ENCODE measurements at regions of chr1 and their contacts with region 1.

Region 1: DNA sequence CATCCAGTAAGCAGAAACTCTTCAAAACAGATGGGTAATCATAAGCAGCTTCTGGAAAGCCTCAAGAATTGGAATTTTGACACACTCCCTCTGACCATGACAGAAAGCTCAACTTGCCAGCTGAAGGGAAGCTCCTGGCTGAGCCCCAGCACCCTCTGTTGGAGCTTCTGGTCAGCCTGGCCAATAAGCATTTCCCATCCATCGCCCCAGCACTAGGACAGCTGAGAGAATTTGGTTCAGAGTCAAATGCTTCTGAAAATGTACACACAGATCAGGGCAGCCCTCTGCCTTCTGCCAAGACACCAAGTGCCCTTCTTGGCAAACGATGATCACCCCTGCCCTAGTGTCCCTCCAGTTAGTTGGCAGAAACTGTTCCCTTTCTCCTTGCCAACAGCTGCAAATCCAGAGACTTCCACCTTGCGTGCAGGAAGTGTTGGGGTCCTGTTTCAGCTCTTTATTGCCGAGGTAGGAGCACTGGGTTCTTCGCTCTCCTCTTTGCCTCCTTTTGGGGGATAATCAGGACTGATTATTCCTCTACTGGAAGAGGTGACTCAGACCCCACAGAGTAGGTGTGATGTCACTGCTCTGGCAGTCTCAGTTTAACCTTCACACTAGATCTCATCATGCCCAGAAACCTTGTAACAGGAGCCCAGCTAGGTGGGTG is 11.9 kb downstream of the PIGV start:
- DNase-seq: no peak
- H3K4me3 ChIP-seq: no peak overlapping the region
- H3K4me3 Mint-ChIP-seq: peak overlapping the region in 7 of 8 donors; percentile 49 to 83 (median 79)
- H3K27ac ChIP-seq: peak overlapping the region; percentile 30
- H3K27ac Mint-ChIP-seq: peak overlapping the region; percentile 91 to 97 (median 92)
- H3K4me1 ChIP-seq: peaks cover 35% of the 10 kb centered on the region
- H3K4me1 Mint-ChIP-seq: peaks cover 26 to 38% (median 32%) of the 10 kb centered on the region in 4 donors
- H3K27me3 ChIP-seq: no peaks in the 10 kb centered on the region
- H3K27me3 Mint-ChIP-seq: no peaks in the 10 kb centered on the region

Region 2: GRCh38 chr1:26826261-26827105 is 26.9 kb after region 1 on chr1 and contains the start of gene ZDHHC18:
- CTCF ChIA-PET with region 1: interaction called, 45 read pairs
- POLR2A ChIA-PET with region 1: interaction called, 3 read pairs
- intact Hi-C with region 1: no loop called
- DNase-seq: peak; percentile 66 to 82 (median 78)
- H3K4me3 ChIP-seq: peak within 1 kb of the TSS; percentile 50 to 69
- H3K4me3 Mint-ChIP-seq: peak within 1 kb of the TSS; percentile 93 to 98 (median 94)
- H3K27ac ChIP-seq: peak within 1 kb of the TSS; percentile 94
- H3K27ac Mint-ChIP-seq: peak within 1 kb of the TSS; percentile 96 to 100 (median 100)
- H3K4me1 ChIP-seq: peaks cover 57% of the 10 kb centered on the region
- H3K4me1 Mint-ChIP-seq: peaks cover 47 to 72% (median 57%) of the 10 kb centered on the region in 4 donors
- H3K27me3 ChIP-seq: no peaks in the 10 kb centered on the region
- H3K27me3 Mint-ChIP-seq: no peaks in the 10 kb centered on the region
- total RNA-seq, gene ZDHHC18: 54.9 to 56.4 TPM

Region 3: DNA sequence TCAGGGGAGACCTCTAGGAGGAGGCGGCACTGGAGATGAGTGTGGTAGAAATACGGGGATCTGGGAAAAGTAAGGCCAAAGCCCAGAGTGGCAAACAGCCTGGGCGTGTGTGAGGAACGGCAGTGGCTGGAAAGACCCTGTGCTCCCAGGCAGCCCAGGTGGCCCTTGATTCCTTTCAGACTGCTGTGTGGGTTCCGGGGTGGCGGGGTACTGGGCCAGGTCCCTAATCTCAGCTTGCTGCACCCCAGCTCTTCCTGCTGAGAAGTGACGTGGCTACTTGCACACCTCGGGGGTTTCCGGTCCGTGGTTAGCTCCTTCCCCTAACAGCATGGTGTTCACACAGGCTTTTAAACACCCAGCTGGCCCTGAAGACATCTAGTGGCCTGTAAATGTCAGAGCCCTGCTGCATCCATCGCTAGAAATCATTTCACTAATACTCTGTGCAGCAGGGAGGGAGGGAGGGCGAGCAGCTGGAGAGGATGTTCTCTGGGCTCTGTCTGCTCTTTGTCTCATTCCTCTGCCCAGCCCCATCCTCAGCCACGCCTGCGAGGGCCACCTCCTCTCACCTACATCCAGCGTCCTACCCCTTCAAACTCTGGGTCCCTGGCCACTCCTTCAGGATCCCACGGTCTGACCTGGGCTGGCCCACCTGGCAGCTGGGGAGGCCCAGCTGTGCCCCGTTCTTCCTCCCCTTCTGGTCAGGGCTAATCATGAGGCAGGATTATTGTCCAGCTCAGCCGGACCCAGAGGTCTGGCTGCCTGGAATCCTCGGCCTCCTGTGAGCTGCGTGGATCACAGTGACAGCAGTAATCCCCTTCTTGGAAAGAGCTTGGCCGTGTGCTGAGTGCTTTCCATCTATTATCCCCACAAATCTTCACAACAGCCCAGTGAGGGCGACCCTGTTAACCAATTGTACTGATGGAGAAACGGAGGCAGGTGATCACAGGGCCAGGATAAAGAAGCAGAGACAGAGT is 34.1 kb after region 1 on chr1:
- CTCF ChIA-PET with region 1: interaction called, 31 read pairs
- POLR2A ChIA-PET with region 1: interaction called, 25 read pairs
- intact Hi-C with region 1: no loop called
- DNase-seq: peak; percentile 89 to 98 (median 94)
- H3K4me3 ChIP-seq: peak overlapping the region in 1 of 2 donors; percentile 23
- H3K4me3 Mint-ChIP-seq: peak overlapping the region; percentile 74 to 92 (median 85)
- H3K27ac ChIP-seq: peak overlapping the region; percentile 97
- H3K27ac Mint-ChIP-seq: peak overlapping the region; percentile 98 to 100 (median 100)
- H3K4me1 ChIP-seq: peaks cover 74% of the 10 kb centered on the region
- H3K4me1 Mint-ChIP-seq: peaks cover 60 to 87% (median 73%) of the 10 kb centered on the region in 4 donors
- H3K27me3 ChIP-seq: no peaks in the 10 kb centered on the region
- H3K27me3 Mint-ChIP-seq: no peaks in the 10 kb centered on the region

Measured in CD4-positive, alpha-beta memory T cell (primary cell).